HCT116 (cell line): ENCODE measurements at regions of chr3 and their contacts with region 1.

Region 1: DNA sequence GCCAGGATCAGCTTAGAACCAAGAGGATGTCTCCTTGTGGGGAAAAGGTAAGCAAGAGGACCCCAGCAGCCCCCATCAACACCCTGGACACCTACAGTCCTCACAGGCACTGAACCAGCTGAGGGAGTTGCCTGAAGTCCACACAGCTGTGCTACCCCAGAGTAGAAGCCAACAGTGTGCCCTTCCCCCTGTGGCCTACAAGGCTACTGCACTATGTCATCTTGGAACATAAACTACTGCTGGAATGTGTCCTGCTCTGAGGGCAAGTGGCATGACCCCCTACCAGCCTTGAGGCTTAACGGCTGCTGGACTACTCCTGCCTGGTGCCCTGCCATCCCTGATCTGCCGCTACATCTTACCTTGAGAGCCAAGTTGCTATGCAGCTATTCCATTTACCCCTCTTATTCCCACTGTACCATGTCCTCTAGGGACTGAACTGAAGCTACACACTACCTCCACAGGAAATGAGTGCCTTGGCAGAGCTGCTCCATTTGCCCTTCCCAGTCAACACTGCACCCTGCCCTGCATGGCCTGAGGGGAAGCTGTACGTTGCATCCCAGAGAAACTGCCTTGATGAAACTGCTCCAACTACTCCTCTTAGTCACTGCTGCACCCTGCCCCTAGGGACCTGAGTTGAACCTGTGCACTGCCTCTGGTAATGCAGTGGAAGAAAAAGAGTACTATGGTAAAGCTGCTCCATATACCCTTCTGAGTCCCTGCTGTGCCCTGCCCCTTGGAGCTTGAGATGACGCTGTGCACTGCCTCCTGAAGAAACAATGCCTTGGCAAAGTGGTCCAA is 40.2 kb upstream of the ATP13A5 start:
- DNase-seq: no peak
- ATAC-seq: no peak
- H3K4me3 ChIP-seq: no peak overlapping the region
- H3K27ac ChIP-seq: no peak overlapping the region
- H3K4me1 ChIP-seq: no peaks in the 10 kb centered on the region
- H3K27me3 ChIP-seq: no peaks in the 10 kb centered on the region
- CTCF ChIP-seq: no peak
- POLR2A ChIP-seq: no peak
- RAD21 ChIP-seq: no peak

Region 2: DNA sequence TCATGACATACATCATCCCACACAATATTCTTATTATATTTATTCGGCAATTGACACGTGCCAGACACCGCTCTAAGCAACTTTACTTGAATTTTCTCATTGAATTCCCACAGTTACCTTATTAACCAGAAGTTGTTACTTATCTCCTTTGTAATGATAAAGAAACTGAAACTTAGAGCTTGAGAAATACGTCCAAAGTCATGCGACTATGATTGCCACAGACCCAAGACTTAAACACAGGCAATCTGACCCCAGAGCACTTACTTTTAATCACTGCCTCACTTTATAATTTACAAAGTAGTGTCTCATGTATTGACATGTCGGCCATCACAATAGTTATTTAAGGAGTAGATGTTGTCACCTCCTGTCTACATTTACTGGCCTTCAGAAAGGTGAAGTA is 71.2 kb after region 1 on chr3:
- CTCF ChIA-PET with region 1: no interaction called
- POLR2A ChIA-PET with region 1: no interaction called
- RAD21 ChIA-PET with region 1: no interaction called
- intact Hi-C with region 1: loop called (anchors 5 kb)
- DNase-seq: no peak
- ATAC-seq: no peak
- H3K4me3 ChIP-seq: no peak overlapping the region
- H3K27ac ChIP-seq: no peak overlapping the region
- H3K4me1 ChIP-seq: no peaks in the 10 kb centered on the region
- H3K27me3 ChIP-seq: peaks cover 31% of the 10 kb centered on the region
- CTCF ChIP-seq: no peak
- POLR2A ChIP-seq: no peak
- RAD21 ChIP-seq: no peak

Region 3: DNA sequence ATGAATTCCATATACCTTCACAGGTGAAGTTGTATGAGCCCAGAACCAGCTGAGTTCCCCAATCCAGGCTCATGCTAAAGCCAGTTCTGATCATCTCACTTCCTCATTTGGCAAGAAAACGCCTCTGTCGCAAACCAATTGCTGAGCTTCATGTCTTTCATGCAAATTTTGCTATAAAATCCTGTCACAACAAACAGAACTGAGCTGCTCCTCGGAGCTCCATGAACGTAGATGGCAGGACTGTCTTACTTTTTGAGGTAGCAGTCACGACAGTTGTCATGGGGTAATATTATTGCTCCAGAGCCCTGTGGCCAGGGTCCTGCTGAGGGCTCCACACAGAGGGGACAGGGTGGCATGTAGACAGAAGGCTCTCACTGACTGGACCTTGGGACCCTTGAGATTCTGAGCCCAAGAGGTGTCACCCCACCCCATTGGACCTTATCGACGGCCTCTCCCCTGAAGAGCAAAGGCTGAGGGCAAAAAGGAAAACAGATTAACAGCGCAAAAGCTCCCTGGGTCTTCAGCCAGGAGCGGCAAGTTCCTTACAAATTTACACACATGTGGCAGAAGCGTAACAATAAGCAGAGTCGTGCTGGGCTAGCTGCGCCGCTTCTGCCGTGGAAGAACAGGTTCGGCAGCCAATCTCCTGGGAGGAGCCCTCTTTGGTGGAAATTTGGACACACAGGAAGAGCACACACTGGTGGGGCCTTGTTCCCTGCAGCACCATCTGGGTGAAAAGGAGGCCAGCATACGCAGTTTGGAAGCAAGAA is 423.4 kb after region 1 on chr3:
- CTCF ChIA-PET with region 1: no interaction called
- POLR2A ChIA-PET with region 1: no interaction called
- RAD21 ChIA-PET with region 1: no interaction called
- intact Hi-C with region 1: no loop called
- DNase-seq: no peak
- ATAC-seq: no peak
- H3K4me3 ChIP-seq: no peak overlapping the region
- H3K27ac ChIP-seq: no peak overlapping the region
- H3K4me1 ChIP-seq: peaks cover 0 to 5% of the 10 kb centered on the region in 2 experiments; a peak in 1 of 4 replicates
- H3K27me3 ChIP-seq: no peaks in the 10 kb centered on the region
- CTCF ChIP-seq: no peak
- POLR2A ChIP-seq: no peak
- RAD21 ChIP-seq: no peak